ENCODE measurements at regions of chr1 and their contacts with region 1.

Region 1: GRCh38 chr1:106502659-106503058 is 553.8 kb upstream of the PRMT6 start:
- DNase-seq: no peak
- CTCF ChIP-seq: no peak

Region 2: GRCh38 chr1:106344371-106345099 is 158.1 kb before region 1 on chr1:
- CTCF ChIA-PET with region 1: no interaction called
- POLR2A ChIA-PET with region 1: no interaction called
- DNase-seq: no peak
- CTCF ChIP-seq: no peak

Region 3: DNA sequence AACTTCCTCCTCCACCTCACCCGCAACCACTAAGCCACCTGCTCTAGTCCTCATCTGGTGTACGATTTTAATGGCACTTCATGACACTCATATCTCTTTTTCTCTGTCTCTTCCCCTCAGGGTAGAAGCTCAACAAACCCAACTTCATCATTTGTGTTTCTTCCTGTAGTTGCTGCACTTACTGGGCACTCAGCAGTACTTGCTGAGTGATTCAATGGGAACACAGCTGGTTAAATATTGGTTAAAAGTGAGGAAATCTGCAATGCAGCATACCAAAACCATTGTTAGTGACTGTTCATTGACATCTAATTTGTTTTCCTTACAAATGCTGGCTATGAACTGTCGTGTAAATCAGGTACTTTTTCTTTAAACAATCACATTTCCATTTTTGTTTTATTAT is 12.7 kb after region 1 on chr1:
- CTCF ChIA-PET with region 1: interaction called, 10 read pairs
- POLR2A ChIA-PET with region 1: no interaction called
- DNase-seq: no peak
- CTCF ChIP-seq: no peak

Region 4: DNA sequence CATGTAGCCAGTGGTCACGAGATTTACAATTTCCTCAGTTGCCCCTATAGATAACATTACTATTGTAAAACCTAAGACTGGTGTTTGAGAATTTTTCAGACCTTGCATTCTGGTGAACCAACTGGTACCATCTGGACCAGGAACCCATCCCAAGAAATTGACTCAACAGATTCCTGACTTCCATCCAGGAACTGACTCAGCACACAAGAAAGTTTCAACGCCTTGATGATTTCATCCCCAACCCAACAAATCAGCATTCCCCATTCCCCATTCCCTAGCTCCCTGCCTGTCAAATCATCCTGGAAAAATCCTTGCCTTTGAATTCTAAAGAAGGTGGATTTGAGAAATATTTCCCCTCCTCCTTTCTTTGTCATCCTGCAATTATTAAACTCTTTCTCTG is 24.0 kb after region 1 on chr1:
- CTCF ChIA-PET with region 1: no interaction called
- POLR2A ChIA-PET with region 1: no interaction called
- DNase-seq: no peak
- CTCF ChIP-seq: no peak

Region 5: GRCh38 chr1:106700216-106700615 is 197.6 kb after region 1 on chr1:
- CTCF ChIA-PET with region 1: no interaction called
- POLR2A ChIA-PET with region 1: no interaction called
- DNase-seq: no peak
- CTCF ChIP-seq: no peak

Measured in GM10248 (cell line).